PC-3 (cell line): ENCODE measurements at regions of chr9 and their contacts with region 1.

Region 1: GRCh38 chr9:7055201-7055903 is 297.6 kb downstream of the KDM4C start:
- DNase-seq: no peak
- ATAC-seq: no peak
- H3K4me3 ChIP-seq: no peak overlapping the region
- H3K27ac ChIP-seq: no peak overlapping the region
- H3K4me1 ChIP-seq: peaks cover 11% of the 10 kb centered on the region
- H3K27me3 ChIP-seq: no peaks in the 10 kb centered on the region
- CTCF ChIP-seq: no peak

Region 2: GRCh38 chr9:6827439-6827838 is 227.9 kb before region 1 on chr9:
- CTCF ChIA-PET with region 1: no interaction called
- POLR2A ChIA-PET with region 1: no interaction called
- intact Hi-C with region 1: loop called (anchors 1 kb)
- DNase-seq: peak; percentile 79
- ATAC-seq: peak; percentile 57
- H3K4me3 ChIP-seq: no peak overlapping the region
- H3K27ac ChIP-seq: no peak overlapping the region
- H3K4me1 ChIP-seq: peaks cover 10% of the 10 kb centered on the region
- H3K27me3 ChIP-seq: no peaks in the 10 kb centered on the region
- CTCF ChIP-seq: peak; percentile 76

Region 3: DNA sequence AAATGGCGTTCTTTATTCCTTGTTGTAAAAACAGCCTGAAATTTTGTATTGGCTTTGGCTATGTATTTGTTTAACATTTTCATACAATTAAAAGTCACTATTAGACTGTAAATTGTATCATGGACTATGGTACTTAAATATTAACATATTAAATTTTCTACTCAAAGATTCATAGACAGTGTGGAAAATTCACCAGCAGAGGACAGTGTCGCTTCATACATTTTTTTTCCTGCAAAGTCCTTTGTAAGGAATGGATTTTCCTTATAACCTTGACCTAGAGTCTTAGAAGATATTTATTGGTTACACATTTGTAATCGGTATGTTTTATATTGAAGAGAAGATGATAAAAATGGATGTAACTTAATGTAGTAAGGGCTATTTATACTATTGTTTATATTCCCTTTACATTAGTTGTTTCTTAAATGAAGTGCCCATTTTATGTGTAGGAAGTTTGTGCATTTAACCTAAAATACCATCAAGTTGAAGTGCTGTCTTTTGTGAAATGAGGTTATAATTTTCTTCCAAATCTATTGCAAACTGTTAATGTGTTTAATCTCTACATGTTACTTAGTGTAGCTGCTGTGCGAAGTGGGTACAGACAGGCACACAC is 147.5 kb before region 1 on chr9:
- CTCF ChIA-PET with region 1: no interaction called
- POLR2A ChIA-PET with region 1: no interaction called
- intact Hi-C with region 1: loop called (anchors 1 kb)
- DNase-seq: peak; percentile 64
- ATAC-seq: no peak; the same call in 1 of the 2 replicates
- H3K4me3 ChIP-seq: no peak overlapping the region
- H3K27ac ChIP-seq: no peak overlapping the region
- H3K4me1 ChIP-seq: peaks cover 6% of the 10 kb centered on the region
- H3K27me3 ChIP-seq: no peaks in the 10 kb centered on the region
- CTCF ChIP-seq: peak; percentile 76

Region 4: GRCh38 chr9:6955251-6955921 is 100.0 kb before region 1 on chr9:
- CTCF ChIA-PET with region 1: no interaction called
- POLR2A ChIA-PET with region 1: no interaction called
- intact Hi-C with region 1: no loop called
- DNase-seq: no peak
- ATAC-seq: no peak
- H3K4me3 ChIP-seq: no peak overlapping the region
- H3K27ac ChIP-seq: no peak overlapping the region
- H3K4me1 ChIP-seq: no peaks in the 10 kb centered on the region
- H3K27me3 ChIP-seq: no peaks in the 10 kb centered on the region
- CTCF ChIP-seq: no peak

Region 5: GRCh38 chr9:7186175-7186574 is 130.8 kb after region 1 on chr9:
- CTCF ChIA-PET with region 1: interaction called, 6 read pairs
- POLR2A ChIA-PET with region 1: no interaction called
- intact Hi-C with region 1: loop called (anchors 5 kb)
- DNase-seq: peak; percentile 49
- ATAC-seq: peak; percentile 63
- H3K4me3 ChIP-seq: no peak overlapping the region
- H3K27ac ChIP-seq: no peak overlapping the region
- H3K4me1 ChIP-seq: peaks cover 4% of the 10 kb centered on the region; the same call in 1 of the 2 replicates
- H3K27me3 ChIP-seq: no peaks in the 10 kb centered on the region
- CTCF ChIP-seq: peak; percentile 80

Region 6: GRCh38 chr9:7234143-7234542 is 178.8 kb after region 1 on chr9:
- CTCF ChIA-PET with region 1: interaction called, 12 read pairs
- POLR2A ChIA-PET with region 1: no interaction called
- intact Hi-C with region 1: no loop called
- DNase-seq: peak; percentile 67
- ATAC-seq: peak; percentile 33; the same call in 1 of the 2 replicates
- H3K4me3 ChIP-seq: no peak overlapping the region
- H3K27ac ChIP-seq: no peak overlapping the region
- H3K4me1 ChIP-seq: no peaks in the 10 kb centered on the region
- H3K27me3 ChIP-seq: no peaks in the 10 kb centered on the region
- CTCF ChIP-seq: peak; percentile 69

Region 7: GRCh38 chr9:7536310-7536939 is 481.1 kb after region 1 on chr9:
- CTCF ChIA-PET with region 1: no interaction called
- POLR2A ChIA-PET with region 1: no interaction called
- intact Hi-C with region 1: loop called (anchors 5 kb)
- DNase-seq: peak; percentile 24
- ATAC-seq: 0 out of 2 replicates have a peak, but pooled peaks have one; percentile 24
- H3K4me3 ChIP-seq: no peak overlapping the region
- H3K27ac ChIP-seq: no peak overlapping the region
- H3K4me1 ChIP-seq: no peaks in the 10 kb centered on the region
- H3K27me3 ChIP-seq: no peaks in the 10 kb centered on the region
- CTCF ChIP-seq: peak; percentile 58